Posterior cingulate gyrus (tissue), 11 donors: ENCODE measurements at regions of chr6 and their contacts with region 1.

Region 1: DNA sequence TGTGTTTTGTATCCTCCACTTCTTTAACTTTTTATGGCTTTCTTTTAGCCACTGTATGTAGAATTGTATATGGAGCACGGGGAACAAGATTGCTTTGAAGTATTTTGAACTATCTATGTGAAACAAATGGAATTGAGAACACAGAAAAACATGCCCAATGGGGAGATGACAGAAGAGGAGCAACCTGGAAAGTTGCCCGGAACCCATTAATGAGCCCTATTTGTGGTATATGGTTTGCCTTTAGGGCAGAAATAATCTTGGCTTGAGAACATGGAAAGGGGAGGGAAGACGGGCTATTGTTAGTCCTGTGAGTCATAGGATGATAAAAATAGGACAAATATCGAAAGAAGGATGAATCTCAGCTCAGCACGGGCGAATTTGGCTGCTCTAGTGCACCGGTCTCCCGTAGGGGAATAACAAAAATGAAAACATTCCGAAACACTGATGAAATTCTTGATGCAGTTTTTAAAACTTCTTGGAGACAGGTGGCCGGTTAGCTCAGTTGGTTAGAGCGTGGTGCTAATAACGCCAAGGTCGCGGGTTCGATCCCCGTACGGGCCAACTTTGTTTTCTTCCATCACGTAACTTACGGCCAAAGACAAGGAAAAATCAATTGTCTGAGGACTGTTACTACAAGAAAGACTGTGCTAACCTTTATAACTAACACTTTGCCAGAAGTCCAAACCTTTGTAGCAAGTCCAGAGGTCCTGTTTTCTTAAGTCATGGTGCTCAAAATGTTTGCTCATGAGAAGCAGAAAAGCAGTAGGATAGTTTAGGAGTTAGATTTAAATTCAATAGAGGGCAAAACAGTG is 15.7 kb downstream of the HMGN4 start:
- DNase-seq: peak in 9 of 10 donors; percentile 40 to 94 (median 55)

Region 2: GRCh38 chr6:26312501-26313390 is 241.1 kb before region 1 on chr6:
- intact Hi-C with region 1: loop called (anchors 10 kb)
- DNase-seq: peak; percentile 52 to 96 (median 76)

Region 3: GRCh38 chr6:26501482-26501986 is 52.3 kb before region 1 on chr6:
- intact Hi-C with region 1: no loop called
- DNase-seq: peak in 7 of 10 donors; percentile 12 to 83 (median 33)

Region 4: GRCh38 chr6:26537846-26538571 is 15.8 kb before region 1 on chr6 and contains the start of gene HMGN4:
- intact Hi-C with region 1: loop called (anchors 1 kb)
- DNase-seq: peak; percentile 66 to 98 (median 81)

Region 5: GRCh38 chr6:26568601-26569432 is 15.0 kb after region 1 on chr6:
- intact Hi-C with region 1: loop called (anchors 1 kb)
- DNase-seq: peak; percentile 88 to 99 (median 95)

Region 6: DNA sequence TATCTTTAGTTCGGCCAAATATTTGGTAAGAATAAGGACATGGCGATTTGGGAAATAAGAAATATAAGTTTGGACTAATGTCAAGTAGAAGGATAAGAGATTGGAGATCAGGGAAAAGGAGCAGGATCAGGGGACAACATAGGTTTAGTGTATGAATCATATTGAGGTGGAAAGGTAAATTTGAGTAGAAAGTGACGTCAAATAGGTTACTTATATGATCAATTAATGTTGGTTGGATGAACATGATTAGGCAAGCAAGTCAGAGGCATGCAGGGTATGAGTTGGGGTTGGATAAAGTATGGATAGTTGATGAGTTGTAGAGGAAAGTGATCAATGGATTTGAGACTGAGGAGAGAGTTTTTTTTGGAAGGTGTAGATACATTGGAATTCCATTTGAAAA is 108.8 kb after region 1 on chr6:
- intact Hi-C with region 1: no loop called
- DNase-seq: no peak